ENCODE measurements at regions of chr3 and their contacts with region 1.

Region 1: DNA sequence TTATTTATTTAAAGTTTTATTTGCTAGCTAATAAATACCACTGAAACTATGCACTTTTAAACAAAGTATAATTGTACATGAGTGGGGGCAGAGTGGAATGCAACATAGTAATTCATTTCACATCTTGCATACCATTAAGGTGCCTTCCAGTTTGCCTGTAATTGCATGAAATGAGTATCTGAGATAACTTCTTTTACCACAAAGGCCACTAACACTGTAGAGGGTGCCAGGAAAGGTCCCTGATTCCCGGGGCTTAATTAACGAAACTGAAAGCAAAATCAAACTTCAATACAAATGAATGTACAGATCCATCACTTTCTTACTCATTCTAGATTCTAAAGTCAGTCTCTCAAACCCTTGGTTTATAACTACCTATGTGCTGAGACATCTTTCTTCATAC is 2.1 kb downstream of the CD47 start:
- DNase-seq: peak in 1 of 4 donors; percentile 16
- ATAC-seq: no peak
- H3K4me3 ChIP-seq: peak overlapping the region; percentile 78 to 95
- H3K27ac ChIP-seq: peak overlapping the region; percentile 94 to 98
- H3K4me1 ChIP-seq: peaks cover 2 to 68% of the 10 kb centered on the region in 2 donors
- H3K27me3 ChIP-seq: no peaks in the 10 kb centered on the region
- CTCF ChIP-seq: no peak

Region 2: GRCh38 chr3:107927361-107928083 is 161.2 kb before region 1 on chr3:
- intact Hi-C with region 1: no loop called
- DNase-seq: peak; percentile 58 to 93 (median 67)
- ATAC-seq: peak; percentile 99
- H3K4me3 ChIP-seq: peak overlapping the region; percentile 48 to 50
- H3K27ac ChIP-seq: no peak overlapping the region
- H3K4me1 ChIP-seq: peaks cover 0 to 10% of the 10 kb centered on the region in 2 donors
- H3K27me3 ChIP-seq: peaks cover 0 to 28% of the 10 kb centered on the region in 2 donors
- CTCF ChIP-seq: peak; percentile 86 to 90

Region 3: GRCh38 chr3:108022256-108023097 is 66.2 kb before region 1 on chr3:
- intact Hi-C with region 1: loop called in 1 of 2 experiments (anchors 10 kb)
- DNase-seq: peak in 2 of 4 donors; percentile 39 to 62
- ATAC-seq: peak; percentile 96
- H3K4me3 ChIP-seq: no peak overlapping the region
- H3K27ac ChIP-seq: peak overlapping the region; percentile 7 to 33
- H3K4me1 ChIP-seq: no peaks in the 10 kb centered on the region
- H3K27me3 ChIP-seq: peaks cover 0 to 12% of the 10 kb centered on the region in 2 donors
- CTCF ChIP-seq: no peak

Region 4: GRCh38 chr3:108153451-108153981 is 64.8 kb after region 1 on chr3:
- intact Hi-C with region 1: no loop called
- DNase-seq: peak in 1 of 4 donors; percentile 20
- ATAC-seq: peak; percentile 62
- H3K4me3 ChIP-seq: no peak overlapping the region
- H3K27ac ChIP-seq: no peak overlapping the region
- H3K4me1 ChIP-seq: peaks cover 0 to 14% of the 10 kb centered on the region in 2 donors
- H3K27me3 ChIP-seq: no peaks in the 10 kb centered on the region
- CTCF ChIP-seq: peak in 1 of 2 donors; percentile 19

Measured in left lung (tissue), 14 donors.